ENCODE measurements at regions of chr14 and their contacts with region 1.

Region 1: GRCh38 chr14:105659960-105660476 is 133.6 kb downstream of the TMEM121 start:
- DNase-seq: no peak
- ATAC-seq: no peak
- H3K4me3 Mint-ChIP-seq: no peak overlapping the region
- H3K27ac Mint-ChIP-seq: no peak overlapping the region
- H3K4me1 Mint-ChIP-seq: no peaks in the 10 kb centered on the region
- H3K27me3 Mint-ChIP-seq: no peaks in the 10 kb centered on the region
- CTCF ChIP-seq: no peak

Region 2: DNA sequence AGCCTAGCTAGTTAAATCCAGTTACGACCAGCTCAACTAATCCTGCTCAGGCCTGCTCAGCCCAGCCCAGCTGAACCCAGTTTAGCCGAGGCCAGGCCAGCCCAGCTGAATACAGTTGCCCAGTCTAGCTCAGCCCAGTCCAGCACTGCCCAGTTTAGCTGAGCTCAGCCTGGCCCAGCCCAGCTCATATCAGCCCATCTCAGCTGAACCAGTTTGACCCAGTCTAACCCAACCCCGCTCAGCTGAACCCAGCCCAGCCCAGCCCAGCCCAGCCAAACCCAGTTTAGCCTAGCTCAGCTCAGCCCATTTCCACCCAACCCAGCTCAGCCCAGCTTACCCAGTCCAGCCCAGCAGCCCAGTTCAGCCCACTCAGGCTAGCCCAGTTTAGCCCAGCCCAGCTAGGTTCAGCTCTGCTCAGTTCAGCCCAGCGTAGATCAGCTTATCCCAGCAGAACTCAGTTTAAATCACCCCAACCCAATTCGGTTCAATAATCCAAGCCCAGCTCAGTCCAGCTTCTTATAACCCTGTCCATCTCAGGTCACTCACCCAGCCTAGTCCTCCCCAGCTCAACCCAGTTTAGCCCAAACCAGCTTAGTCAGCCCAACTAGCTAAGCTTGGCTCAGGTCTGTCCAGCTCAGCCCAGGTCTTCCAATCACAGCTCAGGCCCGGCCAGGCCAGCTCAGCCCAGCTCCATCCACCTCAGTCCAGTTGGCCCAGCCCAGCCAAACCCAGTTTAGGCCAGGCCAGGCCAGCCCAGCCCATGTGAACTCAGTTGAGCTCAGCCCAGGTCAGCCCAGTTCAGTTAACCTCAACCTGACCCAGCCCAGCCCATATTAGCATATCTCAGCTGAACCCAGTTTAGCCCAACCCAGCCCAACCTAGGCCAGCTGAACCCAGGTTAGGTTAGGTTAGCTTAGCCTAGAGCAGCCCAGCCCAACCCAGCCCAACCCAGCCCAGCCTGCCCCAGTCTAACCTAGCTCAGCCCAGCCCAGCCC is 56.9 kb before region 1 on chr14:
- CTCF ChIA-PET with region 1: no interaction called
- POLR2A ChIA-PET with region 1: no interaction called
- intact Hi-C with region 1: loop called (anchors 10 kb)
- DNase-seq: no peak
- ATAC-seq: peak; percentile 25
- H3K4me3 Mint-ChIP-seq: no peak overlapping the region
- H3K27ac Mint-ChIP-seq: peak overlapping the region; percentile 15
- H3K4me1 Mint-ChIP-seq: peaks cover 16% of the 10 kb centered on the region
- H3K27me3 Mint-ChIP-seq: no peaks in the 10 kb centered on the region
- CTCF ChIP-seq: no peak